Activated CD4-positive, alpha-beta memory T cell treated with anti-CD3 and anti-CD28 coated beads for 36 hours (primary cell): ENCODE measurements at regions of chr1 and their contacts with region 1.

Region 1: GRCh38 chr1:33367485-33368405 is 46.8 kb upstream of the A3GALT2 start:
- DNase-seq: peak; percentile 88
- H3K4me3 Mint-ChIP-seq: no peak overlapping the region
- H3K27ac Mint-ChIP-seq: no peak overlapping the region
- H3K4me1 Mint-ChIP-seq: no peaks in the 10 kb centered on the region
- H3K27me3 Mint-ChIP-seq: no peaks in the 10 kb centered on the region

Region 2: GRCh38 chr1:33111970-33112369 is 255.8 kb before region 1 on chr1:
- CTCF ChIA-PET with region 1: no interaction called
- POLR2A ChIA-PET with region 1: no interaction called
- intact Hi-C with region 1: loop called (anchors 5 kb)
- DNase-seq: peak; percentile 7
- H3K4me3 Mint-ChIP-seq: no peak overlapping the region
- H3K27ac Mint-ChIP-seq: no peak overlapping the region
- H3K4me1 Mint-ChIP-seq: no peaks in the 10 kb centered on the region
- H3K27me3 Mint-ChIP-seq: no peaks in the 10 kb centered on the region